CD8-positive, alpha-beta T cell (primary cell): ENCODE measurements at regions of chr1 and their contacts with region 1.

Region 1: GRCh38 chr1:112729909-112730308 is 14.8 kb upstream of the PPM1J start:
- DNase-seq: no peak
- ATAC-seq: no peak
- H3K4me3 ChIP-seq: no peak overlapping the region
- H3K4me3 Mint-ChIP-seq: no peak overlapping the region
- H3K27ac ChIP-seq: no peak overlapping the region
- H3K27ac Mint-ChIP-seq: no peak overlapping the region
- H3K4me1 ChIP-seq: no peaks in the 10 kb centered on the region
- H3K4me1 Mint-ChIP-seq: no peaks in the 10 kb centered on the region
- H3K27me3 ChIP-seq: no peaks in the 10 kb centered on the region
- H3K27me3 Mint-ChIP-seq: peaks cover 6% of the 10 kb centered on the region
- CTCF ChIP-seq: no peak

Region 2: DNA sequence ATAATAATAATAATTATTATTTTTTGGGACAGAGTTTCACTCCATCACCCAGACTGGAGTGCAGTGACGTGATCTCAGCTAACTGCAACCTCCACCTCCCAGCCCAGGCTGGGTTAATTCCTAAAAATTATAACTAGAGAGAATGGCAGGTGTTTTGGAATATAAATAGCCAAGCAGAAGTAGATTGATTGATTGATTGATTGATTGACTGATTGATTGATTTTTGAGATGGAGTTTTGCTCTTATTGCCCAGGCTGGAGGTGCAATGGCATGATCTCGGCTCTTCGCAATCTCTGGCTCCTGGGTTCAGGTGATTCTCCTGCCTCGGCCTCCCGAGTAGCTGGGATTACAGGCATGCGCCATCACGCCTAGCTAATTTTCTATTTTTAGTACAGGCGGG is 69.8 kb before region 1 on chr1:
- CTCF ChIA-PET with region 1: no interaction called
- POLR2A ChIA-PET with region 1: no interaction called
- intact Hi-C with region 1: no loop called
- DNase-seq: no peak
- ATAC-seq: no peak
- H3K4me3 ChIP-seq: no peak overlapping the region
- H3K4me3 Mint-ChIP-seq: no peak overlapping the region
- H3K27ac ChIP-seq: no peak overlapping the region
- H3K27ac Mint-ChIP-seq: no peak overlapping the region
- H3K4me1 ChIP-seq: no peaks in the 10 kb centered on the region
- H3K4me1 Mint-ChIP-seq: peaks cover 6% of the 10 kb centered on the region
- H3K27me3 ChIP-seq: no peaks in the 10 kb centered on the region
- H3K27me3 Mint-ChIP-seq: no peaks in the 10 kb centered on the region
- CTCF ChIP-seq: no peak

Region 3: GRCh38 chr1:112818990-112819689 is 89.2 kb after region 1 on chr1:
- CTCF ChIA-PET with region 1: no interaction called
- POLR2A ChIA-PET with region 1: no interaction called
- intact Hi-C with region 1: loop called in 1 of 2 experiments (anchors 5 kb)
- DNase-seq: peak in 1 of 9 experiments; percentile 8
- ATAC-seq: no peak
- H3K4me3 ChIP-seq: no peak overlapping the region
- H3K4me3 Mint-ChIP-seq: no peak overlapping the region
- H3K27ac ChIP-seq: no peak overlapping the region
- H3K27ac Mint-ChIP-seq: no peak overlapping the region
- H3K4me1 ChIP-seq: no peaks in the 10 kb centered on the region
- H3K4me1 Mint-ChIP-seq: peaks cover 3% of the 10 kb centered on the region
- H3K27me3 ChIP-seq: no peaks in the 10 kb centered on the region
- H3K27me3 Mint-ChIP-seq: peaks cover 5% of the 10 kb centered on the region
- CTCF ChIP-seq: no peak

Region 4: DNA sequence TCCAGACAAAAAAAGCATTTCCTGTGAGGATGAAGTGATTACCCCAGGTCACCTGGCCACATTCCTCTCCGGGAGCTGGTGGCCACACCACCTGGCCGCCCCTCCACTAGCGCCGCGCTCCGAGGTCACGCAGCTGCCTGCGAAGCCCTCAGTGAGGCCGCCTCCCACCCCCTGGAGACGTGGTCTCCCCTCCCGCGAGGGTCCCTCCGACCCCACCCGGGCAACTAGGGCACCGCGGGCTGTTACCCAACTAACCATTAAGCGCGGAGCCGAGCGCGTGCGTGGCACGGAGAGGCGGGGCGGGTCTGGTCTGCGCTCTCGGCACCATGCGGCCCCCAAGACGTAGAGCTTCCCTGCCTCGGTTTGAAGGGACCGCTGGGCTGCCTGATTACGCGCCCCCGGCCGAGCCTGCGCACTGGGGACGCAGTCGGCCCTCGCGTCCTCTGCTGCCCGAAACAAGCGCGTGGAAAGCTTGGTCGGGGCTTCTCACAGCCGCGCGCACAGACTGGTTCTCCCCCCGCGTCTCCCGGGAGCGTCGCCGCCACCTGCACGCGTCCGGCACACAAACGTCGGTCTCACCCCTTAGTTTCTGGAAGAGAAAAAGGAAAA is 119.6 kb after region 1 on chr1:
- CTCF ChIA-PET with region 1: no interaction called
- POLR2A ChIA-PET with region 1: no interaction called
- intact Hi-C with region 1: no loop called
- DNase-seq: no peak
- ATAC-seq: no peak
- H3K4me3 ChIP-seq: no peak overlapping the region
- H3K4me3 Mint-ChIP-seq: peak overlapping the region; percentile 11
- H3K27ac ChIP-seq: no peak overlapping the region
- H3K27ac Mint-ChIP-seq: no peak overlapping the region
- H3K4me1 ChIP-seq: no peaks in the 10 kb centered on the region
- H3K4me1 Mint-ChIP-seq: peaks cover 2% of the 10 kb centered on the region
- H3K27me3 ChIP-seq: peaks cover 0 to 4% of the 10 kb centered on the region in 2 experiments
- H3K27me3 Mint-ChIP-seq: peaks cover 31% of the 10 kb centered on the region
- CTCF ChIP-seq: no peak

Region 5: DNA sequence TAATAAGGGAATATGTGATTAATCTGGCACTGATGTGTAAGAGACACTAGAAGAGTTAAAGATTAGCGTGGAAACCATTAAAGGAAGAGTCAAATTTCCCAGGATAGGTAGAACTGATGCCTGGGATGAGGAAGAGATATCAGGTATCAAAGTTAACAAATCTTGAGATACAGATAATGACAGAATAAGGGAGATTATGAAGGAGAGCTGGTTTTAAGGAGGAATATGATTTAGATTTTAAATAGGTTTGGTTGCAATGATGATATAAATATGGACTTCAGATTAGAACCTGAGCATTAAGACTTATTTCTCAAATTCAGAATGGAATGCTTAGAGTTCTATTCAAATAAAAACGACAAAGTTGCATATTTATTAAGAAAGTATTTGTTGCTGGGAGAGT is 686.6 kb after region 1 on chr1:
- CTCF ChIA-PET with region 1: no interaction called
- POLR2A ChIA-PET with region 1: no interaction called
- intact Hi-C with region 1: no loop called
- DNase-seq: no peak
- ATAC-seq: no peak
- H3K4me3 ChIP-seq: no peak overlapping the region
- H3K4me3 Mint-ChIP-seq: no peak overlapping the region
- H3K27ac ChIP-seq: no peak overlapping the region
- H3K27ac Mint-ChIP-seq: no peak overlapping the region
- H3K4me1 ChIP-seq: no peaks in the 10 kb centered on the region
- H3K4me1 Mint-ChIP-seq: no peaks in the 10 kb centered on the region
- H3K27me3 ChIP-seq: peaks cover 0 to 5% of the 10 kb centered on the region in 2 experiments
- H3K27me3 Mint-ChIP-seq: peaks cover 3% of the 10 kb centered on the region
- CTCF ChIP-seq: no peak